A673 (cell line): ENCODE measurements at regions of chr20 and their contacts with region 1.

Region 1: GRCh38 chr20:407133-407952 is 756 bp upstream of the RBCK1 start:
- DNase-seq: peak; percentile 86
- H3K4me3 ChIP-seq: peak overlapping the region; percentile 100
- H3K27ac ChIP-seq: peak overlapping the region; percentile 52
- H3K4me1 ChIP-seq: peaks cover 9% of the 10 kb centered on the region
- H3K27me3 ChIP-seq: no peaks in the 10 kb centered on the region
- CTCF ChIP-seq: peak; percentile 41; the same call in 1 of the 2 replicates

Region 2: GRCh38 chr20:227439-228105 is 179.8 kb before region 1 on chr20:
- CTCF ChIA-PET with region 1: no interaction called
- POLR2A ChIA-PET with region 1: no interaction called
- intact Hi-C with region 1: no loop called
- DNase-seq: no peak
- H3K4me3 ChIP-seq: no peak overlapping the region
- H3K27ac ChIP-seq: no peak overlapping the region
- H3K4me1 ChIP-seq: no peaks in the 10 kb centered on the region
- H3K27me3 ChIP-seq: no peaks in the 10 kb centered on the region
- CTCF ChIP-seq: no peak

Region 3: DNA sequence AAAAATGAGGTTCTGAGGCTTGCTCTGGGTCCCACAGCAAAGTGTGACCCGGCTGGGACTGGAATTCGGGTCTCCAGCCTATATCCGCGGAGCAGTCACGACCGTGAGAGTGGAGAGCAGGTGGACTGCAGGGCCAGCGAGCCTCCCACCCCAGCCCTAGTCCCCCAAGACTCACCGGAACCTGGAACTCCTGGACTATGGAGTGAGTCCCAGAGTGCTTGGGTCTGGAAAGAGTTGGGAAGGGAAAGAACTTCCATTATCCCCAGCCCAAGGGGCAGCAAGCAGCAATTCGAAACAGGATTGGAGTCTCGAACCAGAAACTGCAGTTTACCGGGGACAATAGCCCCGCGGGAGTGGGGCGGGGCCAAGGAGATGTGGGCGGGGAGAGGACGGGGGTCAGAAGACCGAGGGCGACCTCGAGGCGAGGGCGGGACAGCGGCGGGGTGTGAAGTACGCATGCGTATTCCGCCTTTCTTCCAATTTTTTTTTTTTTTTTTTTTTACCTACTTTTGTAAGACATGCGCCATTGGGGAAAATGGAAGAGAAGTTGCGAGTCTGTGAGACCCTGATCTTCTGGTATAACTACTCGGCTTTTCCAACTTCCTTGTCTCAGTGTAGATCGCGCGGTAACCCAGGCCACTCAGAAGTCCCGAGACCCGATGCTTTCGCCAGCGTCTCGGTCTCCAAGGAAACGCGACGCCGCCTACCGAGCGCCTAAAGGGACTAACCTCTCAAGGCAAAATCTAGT is 117.1 kb before region 1 on chr20 and contains the start of gene C20orf96:
- CTCF ChIA-PET with region 1: no interaction called
- POLR2A ChIA-PET with region 1: no interaction called
- intact Hi-C with region 1: no loop called
- DNase-seq: peak; percentile 96
- H3K4me3 ChIP-seq: peak within 1 kb of the TSS; percentile 64
- H3K27ac ChIP-seq: peak within 1 kb of the TSS; percentile 78
- H3K4me1 ChIP-seq: peaks cover 11% of the 10 kb centered on the region
- H3K27me3 ChIP-seq: no peaks in the 10 kb centered on the region
- CTCF ChIP-seq: peak; percentile 41
- total RNA-seq, gene C20orf96: 21.7 and 26.3 TPM in 2 replicates

Region 4: DNA sequence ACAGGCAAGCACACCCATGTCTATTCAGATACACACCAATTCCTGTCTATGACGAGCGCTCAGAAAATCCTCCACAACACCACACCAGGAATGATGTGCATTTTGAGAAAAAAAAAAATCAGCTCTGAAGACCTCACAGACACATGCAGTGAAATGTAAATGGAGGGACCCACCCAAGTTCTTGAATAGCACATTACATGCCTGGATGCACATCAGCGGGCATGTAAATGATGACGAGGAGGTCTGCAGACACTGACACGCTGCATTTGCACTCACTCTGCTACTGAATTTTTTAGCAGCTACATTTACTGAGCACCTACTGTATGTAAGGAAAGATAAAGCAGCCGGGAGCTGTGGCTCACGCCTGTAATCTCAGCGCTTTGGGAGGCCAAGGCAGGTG is 45.8 kb before region 1 on chr20:
- CTCF ChIA-PET with region 1: no interaction called
- POLR2A ChIA-PET with region 1: no interaction called
- intact Hi-C with region 1: loop called (anchors 1 kb)
- DNase-seq: peak; percentile 63
- H3K4me3 ChIP-seq: no peak overlapping the region
- H3K27ac ChIP-seq: peak overlapping the region; percentile 17
- H3K4me1 ChIP-seq: peaks cover 37% of the 10 kb centered on the region
- H3K27me3 ChIP-seq: no peaks in the 10 kb centered on the region
- CTCF ChIP-seq: no peak

Region 5: GRCh38 chr20:420641-421574 is 13.6 kb after region 1 on chr20:
- CTCF ChIA-PET with region 1: no interaction called
- POLR2A ChIA-PET with region 1: interaction called, 13 read pairs
- intact Hi-C with region 1: no loop called
- DNase-seq: peak; percentile 20
- H3K4me3 ChIP-seq: no peak overlapping the region
- H3K27ac ChIP-seq: no peak overlapping the region
- H3K4me1 ChIP-seq: no peaks in the 10 kb centered on the region
- H3K27me3 ChIP-seq: no peaks in the 10 kb centered on the region
- CTCF ChIP-seq: no peak

Region 6: DNA sequence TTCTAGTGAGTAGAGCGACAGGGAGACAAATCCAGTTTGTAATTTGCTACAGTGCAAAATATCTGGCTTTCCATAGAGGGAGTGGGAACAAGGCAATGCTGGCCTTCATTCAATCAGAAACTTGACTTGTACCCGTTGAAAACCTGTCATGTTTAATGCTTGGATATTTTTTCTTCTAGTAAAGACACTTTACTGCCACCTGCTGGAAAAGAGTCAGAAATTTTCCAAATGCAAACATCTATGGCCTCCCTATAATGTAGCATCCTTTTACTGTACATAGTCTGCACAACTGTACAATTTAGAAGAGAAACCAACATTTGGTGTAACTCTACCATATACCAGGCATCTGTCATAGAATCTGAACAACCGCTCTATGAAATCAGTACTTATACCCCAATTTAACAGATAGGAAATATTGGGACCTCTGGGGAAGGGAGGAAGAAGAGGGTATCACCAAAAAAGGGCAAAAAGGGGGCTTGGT is 71.6 kb after region 1 on chr20:
- CTCF ChIA-PET with region 1: no interaction called
- POLR2A ChIA-PET with region 1: interaction called, 10 read pairs
- intact Hi-C with region 1: no loop called
- DNase-seq: peak; percentile 79
- H3K4me3 ChIP-seq: no peak overlapping the region
- H3K27ac ChIP-seq: peak overlapping the region; percentile 61
- H3K4me1 ChIP-seq: peaks cover 3% of the 10 kb centered on the region
- H3K27me3 ChIP-seq: no peaks in the 10 kb centered on the region
- CTCF ChIP-seq: peak; percentile 70